ENCODE measurements at regions of chr17 and their contacts with region 1.

Region 1: GRCh38 chr17:32783602-32784001 is 93.3 kb downstream of the MYO1D start:
- DNase-seq: peak; percentile 49 to 70 (median 54)
- ATAC-seq: peak; percentile 83
- H3K4me3 ChIP-seq: no peak overlapping the region
- H3K27ac ChIP-seq: no peak overlapping the region
- H3K4me1 ChIP-seq: peaks cover 3 to 10% of the 10 kb centered on the region in 2 experiments; a peak in 3 of 5 replicates
- H3K27me3 ChIP-seq: no peaks in the 10 kb centered on the region
- CTCF ChIP-seq: peak; percentile 56 to 87 (median 73); a peak in 5 of 6 replicates
- EP300 ChIP-seq: no peak
- POLR2A ChIP-seq: no peak
- RAD21 ChIP-seq: peak; percentile 95 to 98

Region 2: GRCh38 chr17:32819035-32819434 is 35.4 kb after region 1 on chr17:
- CTCF ChIA-PET with region 1: no interaction called
- POLR2A ChIA-PET with region 1: no interaction called
- in situ Hi-C with region 1: no loop called
- intact Hi-C with region 1: no loop called
- DNase-seq: peak; percentile 25 to 81 (median 48)
- ATAC-seq: peak; percentile 86
- H3K4me3 ChIP-seq: no peak overlapping the region
- H3K27ac ChIP-seq: peak overlapping the region; percentile 67; the same call in 2 of the 3 replicates
- H3K4me1 ChIP-seq: peaks cover 3 to 18% of the 10 kb centered on the region in 2 experiments
- H3K27me3 ChIP-seq: no peaks in the 10 kb centered on the region
- CTCF ChIP-seq: no peak
- EP300 ChIP-seq: peak; percentile 82
- POLR2A ChIP-seq: no peak
- RAD21 ChIP-seq: no peak

Region 3: DNA sequence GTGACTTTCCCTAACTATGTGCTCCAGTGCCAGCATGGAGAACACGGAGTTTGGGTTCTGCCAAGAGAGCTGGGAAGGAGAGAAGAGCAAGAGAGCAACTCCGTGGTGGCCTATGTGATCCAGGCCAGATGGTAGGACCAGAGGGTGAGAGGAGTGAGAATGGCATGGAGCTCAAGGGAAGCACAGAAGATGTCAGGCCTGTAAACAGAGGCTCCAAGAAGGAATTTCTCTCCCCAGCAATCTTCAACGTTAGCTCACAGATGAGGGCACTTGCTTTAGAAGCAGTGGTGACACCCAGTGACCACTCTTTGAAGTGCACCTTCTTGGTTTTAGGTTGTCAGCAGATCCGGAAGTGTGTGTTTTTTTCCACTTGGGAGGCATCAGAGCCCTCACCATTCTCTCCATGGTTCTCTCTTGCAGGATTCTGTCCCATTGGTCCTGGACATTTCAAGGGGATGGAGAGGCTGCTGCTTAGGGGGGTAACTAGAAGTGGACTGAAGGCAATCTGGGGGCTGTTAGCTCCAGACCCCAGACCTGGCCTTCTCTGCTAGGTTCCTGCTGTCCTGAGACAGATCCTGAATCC is 126.3 kb after region 1 on chr17:
- CTCF ChIA-PET with region 1: interaction called, 7 read pairs
- POLR2A ChIA-PET with region 1: interaction called, 3 read pairs
- in situ Hi-C with region 1: loop called (anchors 10 kb)
- intact Hi-C with region 1: loop called (anchors 1 kb)
- DNase-seq: peak; percentile 74 to 94 (median 78)
- ATAC-seq: peak; percentile 77
- H3K4me3 ChIP-seq: no peak overlapping the region
- H3K27ac ChIP-seq: peak overlapping the region; percentile 73
- H3K4me1 ChIP-seq: peaks cover 10 to 48% of the 10 kb centered on the region in 2 experiments; a peak in 4 of 5 replicates
- H3K27me3 ChIP-seq: no peaks in the 10 kb centered on the region
- CTCF ChIP-seq: peak; percentile 91 to 95 (median 91)
- EP300 ChIP-seq: no peak
- POLR2A ChIP-seq: no peak
- RAD21 ChIP-seq: peak; percentile 82 to 95

Region 4: DNA sequence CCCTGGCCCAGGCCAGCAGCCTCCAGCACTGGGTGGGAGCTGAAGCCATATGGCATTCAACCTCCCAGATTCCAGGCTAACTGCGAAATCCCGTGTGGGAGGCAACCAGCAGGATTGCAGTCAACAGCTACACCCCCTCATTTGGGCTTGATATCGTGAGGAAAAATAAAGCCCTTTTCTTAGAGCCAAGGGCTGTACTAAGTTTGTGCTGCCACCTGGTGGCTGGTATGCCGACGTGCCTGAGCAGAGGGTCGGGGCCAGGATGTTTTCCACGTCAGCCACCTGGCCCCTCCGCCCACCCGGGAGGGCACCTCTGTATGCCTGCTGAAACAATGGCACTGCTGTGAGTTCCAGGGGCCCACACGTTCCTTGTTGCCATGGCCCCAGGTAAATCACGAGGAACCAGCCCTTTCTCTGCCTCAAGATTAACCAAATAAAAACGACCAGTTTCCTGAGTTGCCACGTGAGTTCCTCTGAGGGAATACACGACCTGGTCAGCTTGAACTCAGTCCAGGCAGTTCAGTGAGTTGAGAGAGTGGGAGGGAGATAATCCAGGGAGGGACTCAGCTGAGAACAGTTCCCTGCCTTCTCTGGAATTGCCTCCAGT is 153.4 kb after region 1 on chr17:
- CTCF ChIA-PET with region 1: interaction called, 29 read pairs
- POLR2A ChIA-PET with region 1: interaction called, 3 read pairs
- in situ Hi-C with region 1: no loop called
- intact Hi-C with region 1: loop called (anchors 1 kb)
- DNase-seq: peak; percentile 77 to 84 (median 80)
- ATAC-seq: peak; percentile 94
- H3K4me3 ChIP-seq: no peak overlapping the region
- H3K27ac ChIP-seq: 0 out of 3 replicates have a peak overlapping the region, but pooled peaks have one; percentile 16
- H3K4me1 ChIP-seq: peaks cover 6 to 8% of the 10 kb centered on the region in 2 experiments; a peak in 4 of 5 replicates
- H3K27me3 ChIP-seq: no peaks in the 10 kb centered on the region
- CTCF ChIP-seq: peak; percentile 85 to 91 (median 91)
- EP300 ChIP-seq: no peak
- POLR2A ChIP-seq: no peak
- RAD21 ChIP-seq: peak; percentile 70 to 86

Region 5: GRCh38 chr17:32960506-32961214 is 177.1 kb after region 1 on chr17:
- CTCF ChIA-PET with region 1: no interaction called
- POLR2A ChIA-PET with region 1: no interaction called
- in situ Hi-C with region 1: no loop called
- intact Hi-C with region 1: no loop called
- DNase-seq: peak in 2 of 4 experiments; percentile 46 to 54
- ATAC-seq: peak; percentile 58
- H3K4me3 ChIP-seq: no peak overlapping the region
- H3K27ac ChIP-seq: no peak overlapping the region
- H3K4me1 ChIP-seq: peaks cover 19 to 54% of the 10 kb centered on the region in 2 experiments
- H3K27me3 ChIP-seq: no peaks in the 10 kb centered on the region
- CTCF ChIP-seq: no peak
- EP300 ChIP-seq: no peak
- POLR2A ChIP-seq: no peak
- RAD21 ChIP-seq: no peak